GM12878 (cell line): ENCODE measurements at regions of chr5 and their contacts with region 1.

Region 1: DNA sequence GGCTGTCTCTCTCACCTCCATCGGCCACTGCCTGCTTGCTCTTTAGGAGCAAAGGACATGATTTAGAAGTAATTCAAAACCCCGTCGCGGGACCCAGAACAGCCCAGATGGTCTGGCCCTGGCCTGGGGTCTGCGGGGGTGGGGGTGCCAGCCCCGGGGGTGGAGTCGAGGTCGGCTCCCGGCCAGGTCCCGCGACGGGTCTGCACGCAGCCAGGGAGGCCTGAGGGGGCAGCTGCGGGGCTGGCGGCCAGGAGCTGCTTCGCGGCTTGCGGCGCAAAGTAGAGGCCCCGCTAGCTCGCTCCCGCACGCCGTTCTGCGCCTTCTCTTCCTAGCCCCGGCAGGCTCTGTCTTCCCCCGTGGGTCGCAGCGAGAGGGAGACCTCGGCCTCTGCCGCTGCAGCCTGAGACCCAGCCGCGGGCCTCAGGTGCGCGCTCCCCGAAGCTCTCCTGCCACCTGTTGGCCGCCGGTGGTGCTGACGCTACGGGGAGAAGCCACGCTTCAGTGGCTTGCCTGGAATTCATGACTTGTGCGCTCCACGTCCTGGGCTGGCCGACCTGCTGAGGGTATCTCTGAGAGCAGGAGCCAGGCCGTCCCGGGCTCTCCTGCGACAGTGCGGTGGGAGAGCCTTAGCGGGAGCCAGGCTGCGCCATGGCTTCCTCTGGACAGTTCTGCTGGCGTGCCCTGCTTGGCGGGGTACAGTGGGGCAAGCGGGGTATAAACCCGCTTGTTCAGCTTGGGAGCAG is 157.2 kb upstream of the PITX1 start:
- DNase-seq: no peak
- ATAC-seq: peak; percentile 99
- H3K4me3 ChIP-seq: no peak overlapping the region
- H3K27ac ChIP-seq: no peak overlapping the region
- H3K4me1 ChIP-seq: no peaks in the 10 kb centered on the region
- H3K27me3 ChIP-seq: peaks cover 0 to 2% of the 10 kb centered on the region in 2 experiments; a peak in 3 of 4 replicates
- CTCF ChIP-seq: peak; percentile 84 to 93 (median 85)
- EP300 ChIP-seq: no peak
- POLR2A ChIP-seq: no peak
- RAD21 ChIP-seq: peak; percentile 73

Region 2: GRCh38 chr5:134738133-134738962 is 452.9 kb before region 1 on chr5 and contains the start of gene CAMLG:
- CTCF ChIA-PET with region 1: interaction called, 4 read pairs
- POLR2A ChIA-PET with region 1: no interaction called
- RAD21 ChIA-PET with region 1: no interaction called
- SMC1A ChIA-PET with region 1: no interaction called
- in situ Hi-C with region 1: loop called (anchors 25 kb)
- intact Hi-C with region 1: loop called (anchors 10 kb)
- DNase-seq: peak; percentile 92
- ATAC-seq: peak; percentile 97
- H3K4me3 ChIP-seq: peak within 1 kb of the TSS; percentile 90
- H3K27ac ChIP-seq: peak within 1 kb of the TSS; percentile 71
- H3K4me1 ChIP-seq: no peaks in the 10 kb centered on the region
- H3K27me3 ChIP-seq: no peaks in the 10 kb centered on the region
- CTCF ChIP-seq: peak; percentile 67 to 84 (median 74)
- EP300 ChIP-seq: no peak
- POLR2A ChIP-seq: peak; percentile 97
- RAD21 ChIP-seq: peak; percentile 60
- polyA plus RNA-seq, gene CAMLG: 27.0 to 51.7 TPM

Region 3: GRCh38 chr5:134917070-134917815 is 274.0 kb before region 1 on chr5:
- CTCF ChIA-PET with region 1: interaction called, 19 read pairs
- POLR2A ChIA-PET with region 1: no interaction called
- RAD21 ChIA-PET with region 1: interaction called, 4 read pairs
- SMC1A ChIA-PET with region 1: interaction called, 3 read pairs
- in situ Hi-C with region 1: no loop called
- intact Hi-C with region 1: loop called (anchors 1 kb)
- DNase-seq: no peak
- ATAC-seq: peak; percentile 66
- H3K4me3 ChIP-seq: no peak overlapping the region
- H3K27ac ChIP-seq: no peak overlapping the region
- H3K4me1 ChIP-seq: no peaks in the 10 kb centered on the region
- H3K27me3 ChIP-seq: no peaks in the 10 kb centered on the region
- CTCF ChIP-seq: peak; percentile 23 to 51 (median 29); a peak in 4 of 6 replicates
- EP300 ChIP-seq: no peak
- POLR2A ChIP-seq: no peak
- RAD21 ChIP-seq: 0 out of 2 replicates have a peak, but pooled peaks have one; percentile 9

Region 4: GRCh38 chr5:135016861-135017290 is 174.4 kb before region 1 on chr5:
- CTCF ChIA-PET with region 1: no interaction called
- POLR2A ChIA-PET with region 1: no interaction called
- RAD21 ChIA-PET with region 1: no interaction called
- SMC1A ChIA-PET with region 1: no interaction called
- in situ Hi-C with region 1: no loop called
- intact Hi-C with region 1: loop called (anchors 5 kb)
- DNase-seq: no peak
- ATAC-seq: no peak
- H3K4me3 ChIP-seq: no peak overlapping the region
- H3K27ac ChIP-seq: no peak overlapping the region
- H3K4me1 ChIP-seq: no peaks in the 10 kb centered on the region
- H3K27me3 ChIP-seq: no peaks in the 10 kb centered on the region
- CTCF ChIP-seq: no peak
- EP300 ChIP-seq: no peak
- POLR2A ChIP-seq: no peak
- RAD21 ChIP-seq: no peak

Region 5: DNA sequence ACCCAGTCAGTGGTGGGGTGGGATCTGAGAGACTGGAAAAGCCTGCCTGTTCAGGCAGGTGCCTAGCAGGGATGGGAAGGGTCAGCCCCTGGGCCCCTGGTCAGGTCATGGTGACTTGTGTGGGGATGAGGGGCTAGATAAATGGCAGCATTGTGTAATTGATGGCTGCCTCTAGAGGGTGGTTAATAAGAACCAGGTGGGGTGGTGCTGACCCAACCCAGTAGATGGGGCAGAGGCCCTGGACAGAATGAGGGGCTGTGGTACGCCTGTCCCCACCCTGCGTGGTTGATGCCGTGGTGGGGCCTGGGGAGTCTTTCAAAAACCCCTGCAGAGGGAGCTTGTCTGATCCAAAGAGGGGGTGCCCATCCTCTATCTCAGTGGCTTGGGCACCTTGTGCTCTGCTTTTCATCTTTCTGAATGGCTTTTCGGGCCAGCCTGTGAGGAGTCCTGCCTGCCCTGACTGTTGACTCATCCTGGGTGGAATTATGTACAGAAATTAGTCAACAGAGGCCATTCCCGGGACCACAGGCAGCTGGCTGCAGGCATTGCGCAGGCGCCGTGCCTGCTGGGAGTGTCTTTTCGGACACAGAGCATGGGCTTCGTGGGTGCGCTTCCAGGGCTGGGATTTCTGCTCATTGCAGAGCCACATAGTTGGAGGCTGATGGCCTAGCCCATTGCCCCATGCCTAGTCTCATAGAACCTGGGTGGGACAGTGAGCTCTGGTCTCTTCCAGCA is 63.6 kb before region 1 on chr5:
- CTCF ChIA-PET with region 1: no interaction called
- POLR2A ChIA-PET with region 1: no interaction called
- RAD21 ChIA-PET with region 1: no interaction called
- SMC1A ChIA-PET with region 1: no interaction called
- in situ Hi-C with region 1: no loop called
- intact Hi-C with region 1: no loop called
- DNase-seq: no peak
- ATAC-seq: no peak
- H3K4me3 ChIP-seq: no peak overlapping the region
- H3K27ac ChIP-seq: no peak overlapping the region
- H3K4me1 ChIP-seq: no peaks in the 10 kb centered on the region
- H3K27me3 ChIP-seq: peaks cover 0 to 3% of the 10 kb centered on the region in 2 experiments; a peak in 3 of 4 replicates
- CTCF ChIP-seq: no peak
- EP300 ChIP-seq: no peak
- POLR2A ChIP-seq: no peak
- RAD21 ChIP-seq: no peak

Region 6: GRCh38 chr5:135246923-135247795 is 55.9 kb after region 1 on chr5:
- CTCF ChIA-PET with region 1: no interaction called
- POLR2A ChIA-PET with region 1: no interaction called
- RAD21 ChIA-PET with region 1: no interaction called
- SMC1A ChIA-PET with region 1: no interaction called
- in situ Hi-C with region 1: no loop called
- intact Hi-C with region 1: no loop called
- DNase-seq: no peak
- ATAC-seq: no peak
- H3K4me3 ChIP-seq: no peak overlapping the region
- H3K27ac ChIP-seq: no peak overlapping the region
- H3K4me1 ChIP-seq: no peaks in the 10 kb centered on the region
- H3K27me3 ChIP-seq: no peaks in the 10 kb centered on the region; a peak in 3 of 4 replicates
- CTCF ChIP-seq: no peak
- EP300 ChIP-seq: no peak
- POLR2A ChIP-seq: no peak
- RAD21 ChIP-seq: no peak

Region 7: DNA sequence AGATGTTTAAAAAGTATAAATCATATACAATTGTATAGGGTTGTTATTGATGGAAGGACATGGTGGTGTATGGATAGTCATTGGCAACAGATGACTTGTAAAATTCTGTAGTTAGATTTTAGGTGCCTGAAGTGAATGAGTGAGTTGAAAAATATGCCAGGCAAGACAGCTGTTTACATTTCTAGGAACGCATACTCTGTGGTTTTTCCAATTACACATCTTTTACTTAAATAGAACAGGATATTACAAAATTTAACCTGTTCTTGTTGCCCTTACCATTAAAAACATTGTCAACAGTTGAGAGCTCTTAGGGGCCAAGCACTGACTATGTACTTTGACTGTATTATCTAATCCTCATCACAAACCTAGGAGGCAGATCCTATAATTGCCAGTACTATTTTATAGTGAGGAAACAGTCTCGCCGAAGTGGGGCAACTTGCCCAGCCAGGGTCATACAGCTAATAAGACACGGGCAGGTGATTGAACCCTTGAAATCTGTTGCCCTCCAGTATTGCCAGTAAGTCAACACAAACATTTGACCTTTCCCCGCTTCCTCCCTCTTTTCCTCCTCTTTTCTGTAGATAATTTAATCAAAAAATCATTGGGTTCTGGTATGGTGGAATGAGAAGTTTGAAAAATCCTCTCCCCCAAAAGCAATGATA is 119.2 kb after region 1 on chr5:
- CTCF ChIA-PET with region 1: no interaction called
- POLR2A ChIA-PET with region 1: no interaction called
- RAD21 ChIA-PET with region 1: no interaction called
- SMC1A ChIA-PET with region 1: no interaction called
- in situ Hi-C with region 1: no loop called
- intact Hi-C with region 1: no loop called
- DNase-seq: no peak
- ATAC-seq: no peak
- H3K4me3 ChIP-seq: no peak overlapping the region
- H3K27ac ChIP-seq: no peak overlapping the region
- H3K4me1 ChIP-seq: peaks cover 5% of the 10 kb centered on the region
- H3K27me3 ChIP-seq: peaks cover 2% of the 10 kb centered on the region in 2 experiments; a peak in 1 of 4 replicates
- CTCF ChIP-seq: no peak
- EP300 ChIP-seq: no peak
- POLR2A ChIP-seq: no peak
- RAD21 ChIP-seq: no peak

Region 8: DNA sequence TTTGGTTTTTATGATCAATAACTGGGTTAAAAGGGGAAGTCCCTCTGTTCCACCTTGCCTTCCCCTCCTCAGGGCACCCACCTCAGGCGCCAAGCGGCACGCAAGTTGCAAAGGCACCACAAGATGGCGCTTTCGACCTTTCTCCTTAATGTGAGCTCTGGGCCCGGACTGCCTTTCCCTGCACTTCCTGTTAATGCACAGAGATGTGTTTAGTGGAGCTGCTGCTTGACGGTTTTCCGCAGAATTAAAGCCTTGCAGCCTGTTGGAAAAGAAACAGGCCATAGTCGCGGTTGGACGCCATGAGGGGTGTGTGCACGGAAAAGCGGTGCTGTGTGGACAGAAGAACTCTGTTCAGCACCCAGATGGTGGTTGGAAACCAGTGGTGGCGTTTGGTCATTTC is 369.6 kb after region 1 on chr5:
- CTCF ChIA-PET with region 1: no interaction called
- POLR2A ChIA-PET with region 1: no interaction called
- RAD21 ChIA-PET with region 1: no interaction called
- SMC1A ChIA-PET with region 1: no interaction called
- in situ Hi-C with region 1: no loop called
- intact Hi-C with region 1: no loop called
- DNase-seq: peak; percentile 21
- ATAC-seq: peak; percentile 99
- H3K4me3 ChIP-seq: no peak overlapping the region
- H3K27ac ChIP-seq: no peak overlapping the region
- H3K4me1 ChIP-seq: no peaks in the 10 kb centered on the region
- H3K27me3 ChIP-seq: peaks cover 3% of the 10 kb centered on the region in 2 experiments; a peak in 3 of 4 replicates
- CTCF ChIP-seq: peak; percentile 78 to 87 (median 85)
- EP300 ChIP-seq: no peak
- POLR2A ChIP-seq: no peak
- RAD21 ChIP-seq: peak; percentile 70